Aorta (tissue), 5 donors: ENCODE measurements at regions of chr3 and their contacts with region 1.

Region 1: DNA sequence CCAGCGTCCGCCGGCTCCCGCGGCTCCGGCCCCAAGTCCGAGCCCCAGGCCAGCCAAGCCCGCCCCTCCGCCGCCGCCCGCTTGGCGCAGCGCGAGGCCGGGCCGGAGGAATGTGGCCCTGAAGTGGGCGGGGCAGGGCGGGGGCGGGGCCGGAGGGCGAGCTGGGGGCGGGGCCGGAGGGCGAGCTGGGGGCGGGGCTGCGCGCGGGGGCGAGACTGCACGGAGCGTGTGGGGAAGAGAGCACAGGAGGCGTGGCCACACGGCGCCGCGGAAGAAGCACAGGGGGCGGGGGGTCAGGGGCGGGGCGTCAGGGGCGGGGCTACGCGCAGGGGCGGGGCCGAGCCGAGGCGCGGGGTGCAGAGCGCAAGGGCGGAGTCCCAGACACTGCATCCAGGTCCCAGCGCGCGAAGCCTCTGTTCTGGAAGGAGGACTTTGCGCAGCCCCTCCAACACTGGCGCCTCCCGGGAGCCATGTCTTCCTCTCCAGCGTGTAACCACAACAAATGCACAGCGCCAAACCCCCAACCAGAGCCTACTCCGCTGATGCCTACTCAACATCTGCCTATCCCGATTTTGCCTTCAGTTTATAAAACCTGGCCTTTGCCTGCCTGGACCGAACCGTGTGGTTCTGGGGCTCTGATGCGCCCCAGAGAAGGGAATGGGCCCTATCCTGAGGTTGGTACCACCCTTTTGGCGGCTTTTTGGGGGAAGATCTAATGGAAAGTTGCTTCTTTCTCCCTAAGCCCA is 105.5 kb downstream of the IQSEC1 start:
- DNase-seq: peak; percentile 94 to 96
- ATAC-seq: peak; percentile 95
- H3K4me3 ChIP-seq: peak overlapping the region; percentile 90 to 97
- H3K27ac ChIP-seq: peak overlapping the region in 1 of 2 donors; percentile 81
- H3K4me1 ChIP-seq: peaks cover 3 to 11% of the 10 kb centered on the region in 2 donors
- H3K27me3 ChIP-seq: no peaks in the 10 kb centered on the region

Region 2: GRCh38 chr3:12916159-12916558 is 51.6 kb before region 1 on chr3:
- intact Hi-C with region 1: no loop called
- DNase-seq: no peak
- ATAC-seq: no peak
- H3K4me3 ChIP-seq: no peak overlapping the region
- H3K27ac ChIP-seq: no peak overlapping the region
- H3K4me1 ChIP-seq: no peaks in the 10 kb centered on the region
- H3K27me3 ChIP-seq: no peaks in the 10 kb centered on the region

Region 3: DNA sequence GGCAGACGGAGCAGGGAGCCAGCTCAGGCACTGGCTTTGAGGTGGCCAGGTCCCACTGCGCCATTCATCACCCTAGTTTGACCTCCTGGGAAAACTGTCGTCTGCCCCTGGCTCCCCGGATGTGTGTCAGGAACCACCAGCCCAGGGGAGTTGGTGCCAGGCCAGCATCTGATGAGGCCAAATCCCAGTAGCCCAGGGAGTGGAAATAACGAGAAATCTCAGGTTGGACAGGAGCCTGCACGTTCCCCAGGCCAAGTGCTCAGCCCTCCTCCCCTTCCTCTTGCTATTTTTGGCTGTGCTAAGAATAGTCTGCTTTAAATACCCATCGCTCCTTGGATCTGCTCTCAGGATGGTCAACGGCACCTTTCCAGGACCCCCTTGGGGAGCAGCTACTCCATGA is 33.3 kb before region 1 on chr3:
- intact Hi-C with region 1: loop called (anchors 2 to 5 kb)
- DNase-seq: peak; percentile 93 to 95
- ATAC-seq: peak; percentile 73
- H3K4me3 ChIP-seq: no peak overlapping the region
- H3K27ac ChIP-seq: peak overlapping the region; percentile 10 to 78
- H3K4me1 ChIP-seq: peaks cover 0 to 2% of the 10 kb centered on the region in 2 donors
- H3K27me3 ChIP-seq: no peaks in the 10 kb centered on the region